ENCODE measurements at regions of chr1 and their contacts with region 1.

Region 1: GRCh38 chr1:1906185-1907097 is 8.6 kb upstream of the CALML6 start:
- DNase-seq: peak; percentile 90
- ATAC-seq: peak; percentile 76
- H3K4me3 ChIP-seq: no peak overlapping the region
- H3K27ac ChIP-seq: no peak overlapping the region
- H3K4me1 ChIP-seq: peaks cover 15% of the 10 kb centered on the region
- H3K27me3 ChIP-seq: no peaks in the 10 kb centered on the region
- CTCF ChIP-seq: peak; percentile 99

Region 2: GRCh38 chr1:1680912-1681273 is 225.5 kb before region 1 on chr1:
- CTCF ChIA-PET with region 1: no interaction called
- POLR2A ChIA-PET with region 1: no interaction called
- intact Hi-C with region 1: loop called (anchors 10 kb)
- DNase-seq: peak; percentile 1
- ATAC-seq: no peak
- H3K4me3 ChIP-seq: no peak overlapping the region
- H3K27ac ChIP-seq: no peak overlapping the region
- H3K4me1 ChIP-seq: no peaks in the 10 kb centered on the region
- H3K27me3 ChIP-seq: no peaks in the 10 kb centered on the region
- CTCF ChIP-seq: no peak

Region 3: GRCh38 chr1:1777950-1778662 is 128.3 kb before region 1 on chr1 and contains the start of gene NADK:
- CTCF ChIA-PET with region 1: interaction called, 8 read pairs
- POLR2A ChIA-PET with region 1: interaction called, 12 read pairs
- intact Hi-C with region 1: no loop called
- DNase-seq: peak; percentile 90
- ATAC-seq: peak; percentile 48
- H3K4me3 ChIP-seq: peak within 1 kb of the TSS; percentile 97
- H3K27ac ChIP-seq: peak within 1 kb of the TSS; percentile 78
- H3K4me1 ChIP-seq: peaks cover 44% of the 10 kb centered on the region
- H3K27me3 ChIP-seq: no peaks in the 10 kb centered on the region
- CTCF ChIP-seq: no peak
- total RNA-seq, gene NADK: 130 and 165 TPM in 2 replicates

Region 4: GRCh38 chr1:1858382-1859086 is 47.9 kb before region 1 on chr1:
- CTCF ChIA-PET with region 1: interaction called, 11 read pairs
- POLR2A ChIA-PET with region 1: interaction called, 3 read pairs
- intact Hi-C with region 1: loop called (anchors 1 kb)
- DNase-seq: peak; percentile 76
- ATAC-seq: peak; percentile 48
- H3K4me3 ChIP-seq: peak overlapping the region; percentile 12; the same call in 1 of the 2 replicates
- H3K27ac ChIP-seq: peak overlapping the region; percentile 72
- H3K4me1 ChIP-seq: peaks cover 33% of the 10 kb centered on the region
- H3K27me3 ChIP-seq: no peaks in the 10 kb centered on the region
- CTCF ChIP-seq: peak; percentile 71

Region 5: GRCh38 chr1:1919304-1920056 is 13.0 kb after region 1 on chr1:
- CTCF ChIA-PET with region 1: no interaction called
- POLR2A ChIA-PET with region 1: no interaction called
- intact Hi-C with region 1: loop called (anchors 1 kb)
- DNase-seq: peak; percentile 100
- ATAC-seq: peak; percentile 87
- H3K4me3 ChIP-seq: peak overlapping the region; percentile 73
- H3K27ac ChIP-seq: no peak overlapping the region
- H3K4me1 ChIP-seq: peaks cover 15% of the 10 kb centered on the region
- H3K27me3 ChIP-seq: no peaks in the 10 kb centered on the region
- CTCF ChIP-seq: no peak

Region 6: DNA sequence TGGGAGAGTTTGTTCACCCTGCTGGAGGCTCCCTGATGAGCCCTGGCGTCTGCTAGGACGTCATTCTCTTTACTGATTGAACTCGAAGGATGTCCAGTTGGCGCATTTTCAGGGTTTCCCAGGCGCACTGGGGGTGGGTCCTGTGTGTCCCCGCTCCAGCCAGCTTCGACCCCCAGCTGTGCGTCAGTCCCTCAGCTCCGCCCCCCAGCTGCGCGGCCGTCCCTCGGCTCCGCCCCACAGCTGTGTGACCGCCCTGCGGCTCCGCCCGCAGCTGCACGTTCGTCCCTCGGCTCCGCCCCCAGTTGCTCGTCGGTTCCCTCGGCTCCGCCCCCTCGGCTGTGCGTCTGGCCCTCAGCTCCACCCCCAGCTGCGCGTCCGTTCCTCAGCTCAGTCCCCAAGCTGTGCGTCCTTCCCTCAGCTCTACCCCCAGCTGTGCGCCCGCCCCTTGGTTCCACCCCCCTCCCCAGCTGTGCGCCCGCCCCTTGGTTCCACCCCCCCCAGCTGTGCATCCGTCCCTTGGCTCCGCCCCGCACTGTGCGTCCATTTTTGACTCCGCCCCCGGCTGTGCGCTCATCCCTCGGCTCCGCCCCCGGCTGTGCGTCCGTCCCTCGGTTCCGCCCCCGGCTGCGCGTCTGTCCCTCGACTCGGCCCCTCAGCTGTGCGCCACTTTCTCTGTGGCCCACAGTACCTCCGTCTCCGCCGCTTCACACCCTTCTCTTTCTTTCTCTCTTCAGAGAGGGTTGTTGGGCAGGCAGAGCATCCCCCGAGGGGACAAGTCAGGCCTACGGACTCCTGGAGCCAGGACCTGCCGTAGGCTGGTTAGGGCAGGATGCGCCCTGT is 226.8 kb after region 1 on chr1:
- CTCF ChIA-PET with region 1: no interaction called
- POLR2A ChIA-PET with region 1: no interaction called
- intact Hi-C with region 1: loop called (anchors 1 kb)
- DNase-seq: peak; percentile 99
- ATAC-seq: peak; percentile 88
- H3K4me3 ChIP-seq: peak overlapping the region; percentile 69
- H3K27ac ChIP-seq: peak overlapping the region; percentile 89
- H3K4me1 ChIP-seq: peaks cover 16% of the 10 kb centered on the region
- H3K27me3 ChIP-seq: no peaks in the 10 kb centered on the region
- CTCF ChIP-seq: no peak

Measured in PC-3 (cell line).